ENCODE measurements at regions of chr14 and their contacts with region 1.

Region 1: GRCh38 chr14:58439476-58439875 is 12.0 kb downstream of the KIAA0586 start:
- DNase-seq: no peak
- H3K4me3 ChIP-seq: no peak overlapping the region
- H3K27ac ChIP-seq: no peak overlapping the region
- H3K4me1 ChIP-seq: no peaks in the 10 kb centered on the region
- H3K27me3 ChIP-seq: no peaks in the 10 kb centered on the region
- CTCF ChIP-seq: no peak

Region 2: GRCh38 chr14:59474172-59474571 is 1034.7 kb after region 1 on chr14:
- intact Hi-C with region 1: loop called (anchors 5 kb)
- DNase-seq: no peak
- H3K4me3 ChIP-seq: no peak overlapping the region
- H3K27ac ChIP-seq: peak overlapping the region; percentile 43 to 67
- H3K4me1 ChIP-seq: no peaks in the 10 kb centered on the region
- H3K27me3 ChIP-seq: no peaks in the 10 kb centered on the region
- CTCF ChIP-seq: no peak